ENCODE measurements at regions of chr14 and their contacts with region 1.

Region 1: GRCh38 chr14:22766456-22767322 is at the start of gene OXA1L:
- DNase-seq: peak; percentile 100
- ATAC-seq: peak; percentile 90
- H3K4me3 ChIP-seq: peak within 1 kb of the TSS; percentile 72 to 96 (median 83)
- H3K27ac ChIP-seq: peak within 1 kb of the TSS; percentile 74
- H3K4me1 ChIP-seq: peaks cover 22% of the 10 kb centered on the region
- H3K27me3 ChIP-seq: no peaks in the 10 kb centered on the region; a peak in 1 of 5 replicates
- CTCF ChIP-seq: peak; percentile 37
- EP300 ChIP-seq: peak in 1 of 2 experiments; percentile 52; a peak in 1 of 4 replicates
- POLR2A ChIP-seq: peak; percentile 98
- RAD21 ChIP-seq: peak; percentile 13
- total RNA-seq, gene OXA1L: 216 and 230 TPM in 2 replicates

Region 2: GRCh38 chr14:22556990-22557623 is 209.6 kb before region 1 on chr14:
- CTCF ChIA-PET with region 1: interaction called, 3 read pairs
- POLR2A ChIA-PET with region 1: interaction called, 7 read pairs
- in situ Hi-C with region 1: no loop called
- intact Hi-C with region 1: loop called (anchors 2 kb)
- DNase-seq: peak; percentile 74
- ATAC-seq: peak; percentile 70
- H3K4me3 ChIP-seq: peak overlapping the region; percentile 27 to 66 (median 28); a peak in 4 of 6 replicates
- H3K27ac ChIP-seq: no peak overlapping the region
- H3K4me1 ChIP-seq: peaks cover 63% of the 10 kb centered on the region
- H3K27me3 ChIP-seq: peaks cover 9 to 42% of the 10 kb centered on the region in 2 experiments; a peak in 4 of 5 replicates
- CTCF ChIP-seq: peak; percentile 98
- EP300 ChIP-seq: peak in 1 of 2 experiments; percentile 51; a peak in 1 of 4 replicates
- POLR2A ChIP-seq: no peak
- RAD21 ChIP-seq: peak; percentile 100

Region 3: DNA sequence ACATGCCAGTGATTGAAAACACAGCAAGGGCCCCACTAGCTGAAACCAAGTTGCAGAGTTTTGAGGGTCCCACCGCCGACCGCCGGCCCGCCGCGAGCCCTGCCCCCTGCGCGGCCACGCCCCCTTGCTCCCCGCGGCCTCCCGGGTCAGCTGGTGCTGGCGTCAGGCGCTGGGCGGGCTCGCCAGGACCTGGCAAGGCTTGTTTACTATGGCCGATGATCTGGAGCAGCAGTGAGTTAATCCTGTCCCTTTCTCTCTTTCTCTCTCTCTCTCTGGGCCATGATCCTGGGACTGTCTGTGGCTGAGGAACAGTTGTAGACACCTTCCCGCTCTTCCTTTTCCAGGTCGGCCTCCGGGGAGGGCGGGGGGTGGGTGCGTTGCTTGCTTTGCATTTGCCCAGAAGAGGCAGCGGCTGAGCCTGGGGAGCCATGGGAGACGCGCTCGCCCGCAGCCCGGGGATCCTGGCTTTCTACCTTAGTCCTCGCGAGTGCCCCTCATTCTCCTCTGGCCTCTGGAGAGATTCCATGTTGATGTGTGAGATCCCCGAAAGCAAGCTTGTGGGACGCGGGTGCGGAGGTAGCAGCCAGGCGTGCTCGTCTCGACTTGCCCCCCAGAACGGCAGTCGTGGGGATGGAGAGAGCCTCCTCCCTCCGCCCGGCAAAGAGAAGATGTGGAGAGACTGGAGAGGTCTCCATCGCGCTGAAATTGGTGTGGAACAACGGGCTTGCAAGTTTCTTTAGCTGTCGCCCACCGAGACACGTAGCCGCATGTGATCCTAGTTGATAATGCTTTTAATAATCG is 168.4 kb before region 1 on chr14 and contains the start of gene ABHD4:
- CTCF ChIA-PET with region 1: no interaction called
- POLR2A ChIA-PET with region 1: interaction called, 18 read pairs
- in situ Hi-C with region 1: no loop called
- intact Hi-C with region 1: no loop called
- DNase-seq: peak; percentile 79
- ATAC-seq: peak; percentile 95
- H3K4me3 ChIP-seq: peak within 1 kb of the TSS; percentile 76 to 94 (median 82)
- H3K27ac ChIP-seq: peak within 1 kb of the TSS; percentile 73
- H3K4me1 ChIP-seq: peaks cover 34% of the 10 kb centered on the region
- H3K27me3 ChIP-seq: peaks cover 0 to 13% of the 10 kb centered on the region in 2 experiments; a peak in 2 of 5 replicates
- CTCF ChIP-seq: no peak
- EP300 ChIP-seq: peak; percentile 32 to 50; a peak in 2 of 4 replicates
- POLR2A ChIP-seq: peak in 1 of 2 experiments; percentile 85; a peak in 2 of 4 replicates
- RAD21 ChIP-seq: 0 out of 2 replicates have a peak, but pooled peaks have one; percentile 6
- total RNA-seq, gene ABHD4: 16.1 and 22.8 TPM in 2 replicates

Region 4: DNA sequence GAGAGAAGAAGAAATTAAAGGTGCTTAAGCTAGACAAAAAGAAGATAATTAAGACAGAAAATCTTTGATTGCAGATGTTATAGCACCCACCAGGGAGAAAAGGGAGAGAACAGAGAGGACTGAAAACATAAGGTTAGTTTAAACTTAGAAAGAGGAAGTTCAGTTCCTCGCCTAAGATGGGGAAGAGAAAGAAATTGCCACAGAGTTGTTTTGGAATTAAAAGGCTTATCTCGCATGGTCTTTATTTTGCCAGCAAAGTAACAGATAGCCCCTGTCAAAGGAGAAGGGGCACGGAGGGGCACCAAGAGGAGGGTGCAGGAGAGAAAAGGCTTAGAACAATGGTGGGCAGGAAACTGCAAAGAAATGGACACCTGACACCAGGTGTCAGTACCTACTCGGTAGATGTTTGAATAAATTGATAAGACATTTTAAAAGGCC is 18.0 kb before region 1 on chr14:
- CTCF ChIA-PET with region 1: no interaction called
- POLR2A ChIA-PET with region 1: interaction called, 33 read pairs
- in situ Hi-C with region 1: no loop called
- intact Hi-C with region 1: no loop called
- DNase-seq: no peak
- ATAC-seq: no peak
- H3K4me3 ChIP-seq: no peak overlapping the region
- H3K27ac ChIP-seq: no peak overlapping the region
- H3K4me1 ChIP-seq: peaks cover 17% of the 10 kb centered on the region
- H3K27me3 ChIP-seq: peaks cover 0 to 8% of the 10 kb centered on the region in 2 experiments; a peak in 1 of 5 replicates
- CTCF ChIP-seq: no peak
- EP300 ChIP-seq: no peak
- POLR2A ChIP-seq: no peak
- RAD21 ChIP-seq: no peak

Region 5: DNA sequence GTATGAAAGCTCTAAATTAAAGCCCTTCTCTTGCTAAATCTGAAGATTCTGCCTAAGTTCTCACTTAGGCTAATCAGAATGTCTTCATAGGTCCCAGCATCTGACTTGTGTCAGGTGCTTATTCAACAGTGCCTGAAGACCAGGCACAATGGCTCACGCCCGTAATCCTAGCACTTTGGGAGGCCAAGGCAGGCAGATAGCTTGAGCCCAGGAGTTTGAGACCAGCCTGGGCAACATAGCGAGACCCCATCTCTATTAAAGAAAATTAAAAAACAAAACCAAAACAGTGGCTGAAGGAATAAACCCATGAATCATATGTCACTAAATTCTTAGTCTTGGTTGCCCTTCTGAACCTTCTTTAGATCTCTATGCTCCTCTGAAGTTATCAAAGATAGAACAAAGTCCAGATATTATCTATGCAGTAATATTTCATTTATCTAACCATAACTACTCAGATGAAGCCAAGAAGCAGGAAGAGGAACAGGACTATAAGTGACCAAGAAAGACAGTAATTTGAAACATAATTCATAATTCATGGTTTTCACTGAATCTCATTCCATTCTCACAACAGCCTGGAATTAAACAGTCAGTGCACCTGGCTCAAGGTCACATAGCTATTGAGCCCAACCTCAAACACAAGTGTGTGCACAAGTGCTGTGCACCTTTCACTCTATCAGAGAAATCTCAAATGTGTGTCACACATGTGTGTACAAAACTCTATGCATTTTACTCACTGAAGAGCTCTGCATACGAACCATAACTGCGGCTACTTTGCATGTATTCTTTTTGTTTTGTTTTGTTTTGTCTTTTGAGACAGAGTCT is 41.9 kb after region 1 on chr14:
- CTCF ChIA-PET with region 1: no interaction called
- POLR2A ChIA-PET with region 1: interaction called, 26 read pairs
- in situ Hi-C with region 1: no loop called
- intact Hi-C with region 1: no loop called
- DNase-seq: peak; percentile 52
- ATAC-seq: peak; percentile 15; the same call in 2 of the 3 replicates
- H3K4me3 ChIP-seq: no peak overlapping the region
- H3K27ac ChIP-seq: no peak overlapping the region
- H3K4me1 ChIP-seq: peaks cover 34% of the 10 kb centered on the region
- H3K27me3 ChIP-seq: no peaks in the 10 kb centered on the region
- CTCF ChIP-seq: no peak
- EP300 ChIP-seq: peak in 1 of 2 experiments; percentile 19; a peak in 1 of 4 replicates
- POLR2A ChIP-seq: no peak
- RAD21 ChIP-seq: no peak

Region 6: DNA sequence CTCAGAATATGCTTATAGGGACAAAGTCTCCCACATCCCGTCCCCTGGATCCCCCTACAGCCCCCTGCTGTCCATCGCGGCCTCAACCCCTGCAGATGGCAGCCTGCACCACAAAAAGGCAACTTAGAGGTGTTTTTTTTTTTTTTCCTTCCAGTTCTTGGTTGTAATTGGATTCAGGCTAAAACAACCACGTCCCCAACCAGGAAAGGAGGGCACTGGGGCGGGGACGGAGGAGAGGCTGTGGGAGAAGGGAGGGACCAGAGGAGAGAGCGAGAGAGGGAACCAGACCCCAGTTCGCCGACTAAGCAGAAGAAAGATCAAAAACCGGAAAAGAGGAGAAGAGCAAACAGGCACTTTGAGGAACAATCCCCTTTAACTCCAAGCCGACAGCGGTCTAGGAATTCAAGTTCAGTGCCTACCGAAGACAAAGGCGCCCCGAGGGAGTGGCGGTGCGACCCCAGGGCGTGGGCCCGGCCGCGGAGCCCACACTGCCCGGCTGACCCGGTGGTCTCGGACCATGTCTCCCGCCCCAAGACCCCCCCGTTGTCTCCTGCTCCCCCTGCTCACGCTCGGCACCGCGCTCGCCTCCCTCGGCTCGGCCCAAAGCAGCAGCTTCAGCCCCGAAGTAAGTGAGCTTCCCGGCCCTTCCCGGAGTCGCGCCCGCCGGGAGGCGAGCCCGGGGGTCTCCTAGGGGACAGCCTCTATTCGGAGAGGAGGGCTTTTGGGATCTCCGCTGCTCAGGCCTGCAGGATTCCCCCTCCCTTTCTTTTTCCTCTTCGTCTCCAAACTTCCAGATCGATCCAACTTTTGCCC is 69.8 kb after region 1 on chr14 and contains the start of gene MMP14:
- CTCF ChIA-PET with region 1: no interaction called
- POLR2A ChIA-PET with region 1: interaction called, 23 read pairs
- in situ Hi-C with region 1: no loop called
- intact Hi-C with region 1: no loop called
- DNase-seq: no peak
- ATAC-seq: peak; percentile 11
- H3K4me3 ChIP-seq: peak within 1 kb of the TSS; percentile 55 to 71 (median 57)
- H3K27ac ChIP-seq: no peak within 1 kb of the TSS
- H3K4me1 ChIP-seq: peaks cover 43% of the 10 kb centered on the region
- H3K27me3 ChIP-seq: no peaks in the 10 kb centered on the region
- CTCF ChIP-seq: peak; percentile 42; the same call in 1 of the 2 replicates
- EP300 ChIP-seq: no peak
- POLR2A ChIP-seq: 0 out of 4 replicates have a peak, but pooled peaks of 1 of the 2 experiments have one; percentile 8
- RAD21 ChIP-seq: no peak
- total RNA-seq, gene MMP14: 1.6 and 5.2 TPM in 2 replicates

Region 7: DNA sequence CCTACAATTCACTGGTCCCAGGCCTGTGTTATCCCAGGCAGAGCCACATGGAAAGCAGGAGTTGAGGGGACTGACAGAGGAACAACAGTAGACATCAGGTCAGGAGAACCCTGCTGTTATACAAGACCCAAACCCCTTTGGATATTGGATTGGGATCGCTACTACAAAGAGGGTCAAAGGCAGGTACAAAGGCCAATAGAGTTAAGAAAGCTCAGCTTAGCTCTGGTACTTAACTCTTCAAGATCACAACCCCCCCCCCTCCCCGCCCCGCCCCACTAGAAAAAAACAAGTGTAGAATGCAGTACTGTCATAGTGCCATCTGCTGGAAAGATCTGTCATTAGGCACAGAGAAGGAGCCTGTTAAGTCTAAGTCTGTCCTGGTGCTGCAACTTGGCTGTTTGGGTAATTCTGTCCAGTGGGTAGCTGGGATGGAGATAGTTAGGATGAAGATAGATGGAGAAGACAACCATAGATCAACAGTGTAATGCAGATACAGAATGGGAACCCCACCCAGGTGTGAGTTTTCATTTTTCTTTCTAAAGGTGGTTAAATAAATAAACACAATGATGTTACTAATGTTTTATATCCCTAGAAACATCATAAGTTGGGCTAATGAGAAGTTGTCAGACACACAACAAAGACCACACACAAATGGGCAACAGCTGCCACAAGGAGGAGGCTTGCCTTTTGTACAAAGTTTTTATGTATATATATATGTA is 133.6 kb after region 1 on chr14:
- CTCF ChIA-PET with region 1: no interaction called
- POLR2A ChIA-PET with region 1: interaction called, 17 read pairs
- in situ Hi-C with region 1: no loop called
- intact Hi-C with region 1: no loop called
- DNase-seq: peak; percentile 83
- ATAC-seq: peak; percentile 39
- H3K4me3 ChIP-seq: no peak overlapping the region
- H3K27ac ChIP-seq: no peak overlapping the region
- H3K4me1 ChIP-seq: peaks cover 45% of the 10 kb centered on the region
- H3K27me3 ChIP-seq: peaks cover 4 to 6% of the 10 kb centered on the region in 2 experiments; a peak in 2 of 5 replicates
- CTCF ChIP-seq: peak; percentile 87
- EP300 ChIP-seq: no peak
- POLR2A ChIP-seq: no peak
- RAD21 ChIP-seq: peak; percentile 56; the same call in 1 of the 2 replicates

Measured in HepG2 (cell line).